Activated naive CD4-positive, alpha-beta T cell treated with anti-CD3 and anti-CD28 coated beads for 36 hours (primary cell): ENCODE measurements at regions of chr3 and their contacts with region 1.

Region 1: GRCh38 chr3:109257269-109257668 is 59.0 kb downstream of the DPPA2 start:
- DNase-seq: no peak
- H3K4me3 Mint-ChIP-seq: no peak overlapping the region
- H3K27ac Mint-ChIP-seq: no peak overlapping the region
- H3K4me1 Mint-ChIP-seq: no peaks in the 10 kb centered on the region
- H3K27me3 Mint-ChIP-seq: peaks cover 2% of the 10 kb centered on the region

Region 2: GRCh38 chr3:109045271-109046040 is 211.8 kb before region 1 on chr3:
- CTCF ChIA-PET with region 1: no interaction called
- intact Hi-C with region 1: loop called (anchors 10 kb)
- DNase-seq: no peak
- H3K4me3 Mint-ChIP-seq: no peak overlapping the region
- H3K27ac Mint-ChIP-seq: no peak overlapping the region
- H3K4me1 Mint-ChIP-seq: no peaks in the 10 kb centered on the region
- H3K27me3 Mint-ChIP-seq: no peaks in the 10 kb centered on the region

Region 3: GRCh38 chr3:109241459-109242186 is 15.6 kb before region 1 on chr3:
- CTCF ChIA-PET with region 1: no interaction called
- intact Hi-C with region 1: no loop called
- DNase-seq: no peak
- H3K4me3 Mint-ChIP-seq: no peak overlapping the region
- H3K27ac Mint-ChIP-seq: no peak overlapping the region
- H3K4me1 Mint-ChIP-seq: no peaks in the 10 kb centered on the region
- H3K27me3 Mint-ChIP-seq: no peaks in the 10 kb centered on the region